PC-9 (cell line): ENCODE measurements at regions of chr11 and their contacts with region 1.

Region 1: GRCh38 chr11:8566613-8567210 is 27.3 kb downstream of the STK33 start:
- DNase-seq: peak in 1 of 2 experiments; percentile 35
- H3K4me3 ChIP-seq: no peak overlapping the region
- H3K27ac ChIP-seq: no peak overlapping the region
- H3K4me1 ChIP-seq: peaks cover 9% of the 10 kb centered on the region
- H3K27me3 ChIP-seq: no peaks in the 10 kb centered on the region
- CTCF ChIP-seq: peak; percentile 70

Region 2: DNA sequence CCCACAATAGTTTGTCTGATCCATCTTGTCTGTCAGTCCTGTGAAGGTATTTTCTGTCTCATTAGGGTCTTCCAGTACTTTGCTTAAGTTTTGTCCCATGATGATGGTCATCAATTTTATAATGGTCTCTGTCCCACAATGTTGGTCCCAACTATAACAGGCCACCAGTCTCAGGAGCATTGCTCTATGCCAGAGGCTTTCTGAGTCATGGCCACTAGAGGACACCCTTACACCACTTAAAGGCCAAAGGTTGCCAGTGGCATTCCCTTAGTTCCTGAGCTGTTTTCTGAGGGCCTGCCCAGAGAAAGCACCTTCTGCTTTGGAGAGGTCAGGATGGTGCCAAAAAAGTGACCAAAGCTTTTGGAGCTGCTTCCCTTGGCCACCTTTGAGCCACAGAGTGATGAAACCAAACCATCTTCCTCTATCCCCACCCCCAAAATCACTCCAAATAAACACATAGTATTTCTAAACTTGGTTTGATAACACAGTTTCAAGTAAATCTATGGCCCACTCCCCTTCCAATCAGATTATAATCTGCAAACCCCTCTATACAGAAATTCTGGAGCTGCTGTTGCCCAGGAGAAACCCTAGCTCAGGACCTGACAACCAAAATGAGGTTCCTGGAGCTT is 560.2 kb before region 1 on chr11:
- CTCF ChIA-PET with region 1: interaction called, 4 read pairs
- POLR2A ChIA-PET with region 1: no interaction called
- intact Hi-C with region 1: loop called (anchors 10 kb)
- DNase-seq: peak; percentile 39 to 53
- H3K4me3 ChIP-seq: no peak overlapping the region
- H3K27ac ChIP-seq: no peak overlapping the region
- H3K4me1 ChIP-seq: no peaks in the 10 kb centered on the region
- H3K27me3 ChIP-seq: no peaks in the 10 kb centered on the region; the same call in 1 of the 2 replicates
- CTCF ChIP-seq: peak; percentile 72

Region 3: DNA sequence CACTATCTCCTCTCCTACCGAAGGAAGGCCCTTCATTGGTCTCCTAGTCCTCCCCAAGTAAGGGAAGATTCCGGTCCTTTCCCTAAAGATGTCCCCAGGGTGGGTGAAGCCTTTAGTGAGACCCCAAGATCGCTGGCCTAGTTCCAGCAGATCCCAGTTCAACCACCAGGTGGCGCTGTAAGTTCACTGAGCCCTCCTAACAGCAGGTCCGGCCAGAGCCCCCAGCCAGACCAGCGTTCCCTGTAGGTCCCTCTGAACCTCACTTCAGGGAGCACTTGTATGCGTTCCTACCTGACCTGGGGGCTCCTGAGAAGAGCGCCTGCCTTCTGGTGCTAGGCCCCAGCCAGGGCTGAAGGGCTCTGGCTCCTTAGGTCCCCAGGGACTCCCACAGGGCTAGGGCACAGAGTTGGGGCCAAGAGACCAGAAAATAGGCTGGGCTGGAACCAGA is 341.1 kb before region 1 on chr11:
- CTCF ChIA-PET with region 1: interaction called, 3 read pairs
- POLR2A ChIA-PET with region 1: no interaction called
- intact Hi-C with region 1: loop called (anchors 1 kb)
- DNase-seq: peak; percentile 41 to 57
- H3K4me3 ChIP-seq: no peak overlapping the region
- H3K27ac ChIP-seq: no peak overlapping the region
- H3K4me1 ChIP-seq: peaks cover 19% of the 10 kb centered on the region; the same call in 1 of the 2 replicates
- H3K27me3 ChIP-seq: no peaks in the 10 kb centered on the region
- CTCF ChIP-seq: peak; percentile 92

Region 4: GRCh38 chr11:8333811-8334401 is 232.8 kb before region 1 on chr11:
- CTCF ChIA-PET with region 1: interaction called, 3 read pairs
- POLR2A ChIA-PET with region 1: no interaction called
- intact Hi-C with region 1: loop called (anchors 2 kb)
- DNase-seq: peak; percentile 78 to 83
- H3K4me3 ChIP-seq: no peak overlapping the region
- H3K27ac ChIP-seq: no peak overlapping the region
- H3K4me1 ChIP-seq: peaks cover 50% of the 10 kb centered on the region
- H3K27me3 ChIP-seq: no peaks in the 10 kb centered on the region
- CTCF ChIP-seq: peak; percentile 52

Region 5: DNA sequence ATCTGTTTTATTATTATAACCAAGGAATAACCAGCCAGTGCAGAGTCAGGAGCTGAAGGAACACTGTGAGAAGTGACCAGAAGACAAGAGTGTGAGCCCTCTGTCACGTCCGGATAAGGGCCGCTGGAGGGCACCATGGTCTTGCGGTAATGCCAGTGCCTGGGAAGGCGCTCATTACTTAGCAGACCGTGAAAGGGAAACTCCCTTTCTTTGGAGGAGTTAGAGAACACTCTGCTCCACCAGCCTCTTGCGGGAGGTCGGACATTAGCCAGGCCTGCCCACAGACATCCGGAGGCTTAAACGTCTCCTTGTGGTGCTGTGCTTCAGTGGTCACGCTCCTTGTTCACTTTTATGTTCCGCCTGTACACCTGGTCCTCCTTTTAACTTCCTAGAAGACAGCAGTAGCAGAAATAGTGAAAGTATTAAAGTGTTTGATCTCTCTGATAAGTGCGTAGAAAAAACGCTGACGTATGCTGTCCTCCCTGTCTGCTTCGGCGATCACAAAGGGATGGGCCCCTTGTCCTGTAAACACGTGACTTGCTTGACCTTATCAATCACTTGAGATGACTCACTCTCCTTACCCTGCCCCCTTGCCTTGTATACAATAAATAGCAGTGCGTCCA is 182.4 kb before region 1 on chr11:
- CTCF ChIA-PET with region 1: interaction called, 3 read pairs
- POLR2A ChIA-PET with region 1: no interaction called
- intact Hi-C with region 1: loop called (anchors 5 kb)
- DNase-seq: peak in 1 of 2 experiments; percentile 47
- H3K4me3 ChIP-seq: no peak overlapping the region
- H3K27ac ChIP-seq: no peak overlapping the region
- H3K4me1 ChIP-seq: no peaks in the 10 kb centered on the region
- H3K27me3 ChIP-seq: no peaks in the 10 kb centered on the region
- CTCF ChIP-seq: 0 out of 2 replicates have a peak, but pooled peaks have one; percentile 29

Region 6: DNA sequence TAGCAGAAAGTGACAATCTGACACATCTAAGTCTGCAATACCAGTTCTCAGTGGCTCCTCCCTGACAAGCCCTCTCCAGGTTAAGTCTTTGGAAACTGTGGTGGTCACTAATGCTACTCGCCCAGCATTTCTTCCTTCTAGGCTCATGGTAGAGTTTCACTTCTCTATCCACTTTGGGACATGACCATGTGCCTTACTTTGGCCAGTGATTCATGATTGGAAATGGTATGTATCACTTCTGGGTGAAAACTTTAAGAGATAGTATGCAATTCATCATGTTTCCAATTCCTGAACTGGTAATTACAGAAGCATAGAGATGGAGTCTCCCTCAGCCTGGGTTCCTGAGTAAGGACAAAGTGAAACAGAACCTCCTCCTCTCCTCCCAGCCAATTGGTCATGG is 151.5 kb before region 1 on chr11:
- CTCF ChIA-PET with region 1: no interaction called
- POLR2A ChIA-PET with region 1: no interaction called
- intact Hi-C with region 1: no loop called
- DNase-seq: no peak
- H3K4me3 ChIP-seq: no peak overlapping the region
- H3K27ac ChIP-seq: no peak overlapping the region
- H3K4me1 ChIP-seq: no peaks in the 10 kb centered on the region
- H3K27me3 ChIP-seq: no peaks in the 10 kb centered on the region
- CTCF ChIP-seq: no peak

Region 7: GRCh38 chr11:8523396-8523795 is 43.3 kb before region 1 on chr11:
- CTCF ChIA-PET with region 1: no interaction called
- POLR2A ChIA-PET with region 1: no interaction called
- intact Hi-C with region 1: no loop called
- DNase-seq: no peak
- H3K4me3 ChIP-seq: no peak overlapping the region
- H3K27ac ChIP-seq: no peak overlapping the region
- H3K4me1 ChIP-seq: no peaks in the 10 kb centered on the region
- H3K27me3 ChIP-seq: no peaks in the 10 kb centered on the region
- CTCF ChIP-seq: no peak

Region 8: GRCh38 chr11:8652140-8652539 is 85.4 kb after region 1 on chr11:
- CTCF ChIA-PET with region 1: no interaction called
- POLR2A ChIA-PET with region 1: no interaction called
- intact Hi-C with region 1: no loop called
- DNase-seq: peak in 1 of 2 experiments; percentile 59
- H3K4me3 ChIP-seq: no peak overlapping the region
- H3K27ac ChIP-seq: no peak overlapping the region
- H3K4me1 ChIP-seq: no peaks in the 10 kb centered on the region
- H3K27me3 ChIP-seq: no peaks in the 10 kb centered on the region
- CTCF ChIP-seq: no peak